Dendritic cell treated with granulocyte-macrophage colony-stimulating factor and Interleukin-4, amounts not matched to agents 40 ng/mL and 50 ng/mL, for 4 days (primary cell): ENCODE measurements at regions of chr3 and their contacts with region 1.

Region 1: DNA sequence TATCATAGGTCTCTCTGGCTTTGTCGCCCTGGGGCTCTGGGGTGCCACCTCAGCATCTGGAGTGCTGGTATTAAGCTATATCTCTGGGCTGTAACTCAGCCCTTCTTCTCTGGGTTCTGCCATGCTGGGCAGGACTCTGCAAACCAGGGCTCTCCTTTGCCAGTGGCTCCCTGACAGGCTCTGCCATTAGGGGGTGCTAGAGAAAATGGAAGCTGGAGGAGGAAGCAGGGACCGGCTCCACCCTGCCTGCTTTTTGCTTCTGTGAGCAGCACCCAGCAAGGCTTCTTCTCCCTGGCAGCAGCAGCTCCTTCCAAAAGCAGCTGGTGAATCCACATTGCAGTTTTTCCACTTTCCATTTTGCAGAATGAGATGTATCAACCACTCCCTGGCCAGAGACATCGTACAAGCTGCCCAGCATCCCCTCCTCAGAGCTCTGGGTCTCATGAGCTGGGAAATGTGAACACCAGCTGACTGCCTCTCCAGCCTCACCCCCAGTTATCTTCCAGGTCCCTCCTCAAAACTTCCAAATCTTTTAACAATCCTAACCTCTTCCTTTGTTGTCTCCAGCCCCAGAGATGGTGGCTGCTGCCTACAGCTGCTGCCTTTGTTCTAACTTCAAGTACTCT is 165.0 kb downstream of the ABHD5 start:
- H3K4me3 Mint-ChIP-seq: no peak overlapping the region
- H3K27ac Mint-ChIP-seq: no peak overlapping the region
- H3K4me1 Mint-ChIP-seq: peaks cover 7% of the 10 kb centered on the region
- H3K27me3 Mint-ChIP-seq: peaks cover 48% of the 10 kb centered on the region

Region 2: GRCh38 chr3:43892526-43892925 is 36.7 kb after region 1 on chr3:
- intact Hi-C with region 1: no loop called
- H3K4me3 Mint-ChIP-seq: no peak overlapping the region
- H3K27ac Mint-ChIP-seq: no peak overlapping the region
- H3K4me1 Mint-ChIP-seq: peaks cover 14% of the 10 kb centered on the region
- H3K27me3 Mint-ChIP-seq: peaks cover 44% of the 10 kb centered on the region

Region 3: DNA sequence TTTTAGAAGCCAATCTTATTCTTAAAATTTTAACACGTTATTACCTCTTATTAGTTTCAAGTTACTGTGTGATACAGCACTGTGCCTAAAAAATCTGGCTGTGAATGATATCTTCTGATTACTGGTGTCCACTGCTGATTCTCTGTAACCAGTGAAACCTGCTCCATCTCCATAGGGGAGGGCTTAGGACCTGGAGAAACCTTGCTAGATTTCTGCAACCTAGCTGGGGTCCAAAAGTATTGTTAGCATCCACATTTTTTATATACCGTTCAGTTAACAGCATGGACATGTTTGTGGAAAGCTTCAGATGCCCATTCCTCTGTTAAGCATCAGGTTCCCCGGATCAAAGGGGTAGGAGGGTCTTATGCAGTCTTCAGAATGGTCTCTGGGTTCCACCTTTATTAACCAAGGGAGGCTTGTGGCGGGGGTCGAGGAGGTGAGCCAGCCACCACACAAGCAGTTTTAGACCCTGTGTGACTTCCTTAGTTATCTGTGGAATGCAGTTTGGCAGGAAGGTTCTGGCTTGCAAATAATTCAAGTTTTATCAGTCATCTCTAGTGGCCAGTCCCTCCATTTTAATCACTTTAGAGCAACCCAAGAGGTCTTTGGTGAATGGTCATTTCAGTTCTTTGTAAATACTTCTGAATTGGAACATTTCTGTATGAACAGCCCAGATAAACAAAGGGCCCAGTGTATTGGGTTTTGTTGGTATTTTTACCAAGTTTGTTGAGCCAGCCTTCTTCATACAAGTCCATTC is 192.2 kb after region 1 on chr3:
- intact Hi-C with region 1: no loop called
- H3K4me3 Mint-ChIP-seq: no peak overlapping the region
- H3K27ac Mint-ChIP-seq: no peak overlapping the region
- H3K4me1 Mint-ChIP-seq: peaks cover 14% of the 10 kb centered on the region
- H3K27me3 Mint-ChIP-seq: peaks cover 23% of the 10 kb centered on the region

Region 4: GRCh38 chr3:44114142-44114541 is 258.4 kb after region 1 on chr3:
- intact Hi-C with region 1: loop called (anchors 5 kb)
- H3K4me3 Mint-ChIP-seq: no peak overlapping the region
- H3K27ac Mint-ChIP-seq: no peak overlapping the region
- H3K4me1 Mint-ChIP-seq: no peaks in the 10 kb centered on the region
- H3K27me3 Mint-ChIP-seq: peaks cover 13% of the 10 kb centered on the region